ENCODE measurements at regions of chr18 and their contacts with region 1.

Region 1: DNA sequence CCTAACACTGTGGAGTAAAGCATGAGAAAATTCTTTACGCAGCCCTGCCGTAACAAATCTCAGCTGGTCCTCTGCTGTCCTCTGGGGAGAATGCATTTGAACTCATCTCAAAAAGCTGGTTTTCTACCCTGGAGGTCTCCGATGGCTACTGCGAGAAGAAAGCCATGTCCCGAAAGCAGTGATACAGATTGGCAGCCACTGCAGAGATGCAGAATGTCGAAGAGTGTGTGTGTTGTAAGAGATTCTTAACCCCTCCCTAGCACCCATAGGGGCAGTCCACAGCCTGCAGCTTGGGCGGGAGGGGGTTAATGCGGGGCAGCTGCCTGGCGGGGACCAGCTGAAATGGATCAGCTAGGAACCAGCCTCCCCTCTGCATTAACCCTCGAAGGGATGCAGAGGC is 235.9 kb downstream of the ZNF516 start:
- DNase-seq: no peak
- H3K4me3 ChIP-seq: no peak overlapping the region
- H3K27ac ChIP-seq: no peak overlapping the region
- H3K27me3 ChIP-seq: peaks cover 8% of the 10 kb centered on the region
- CTCF ChIP-seq: 0 out of 2 replicates have a peak, but pooled peaks have one; percentile 17

Region 2: DNA sequence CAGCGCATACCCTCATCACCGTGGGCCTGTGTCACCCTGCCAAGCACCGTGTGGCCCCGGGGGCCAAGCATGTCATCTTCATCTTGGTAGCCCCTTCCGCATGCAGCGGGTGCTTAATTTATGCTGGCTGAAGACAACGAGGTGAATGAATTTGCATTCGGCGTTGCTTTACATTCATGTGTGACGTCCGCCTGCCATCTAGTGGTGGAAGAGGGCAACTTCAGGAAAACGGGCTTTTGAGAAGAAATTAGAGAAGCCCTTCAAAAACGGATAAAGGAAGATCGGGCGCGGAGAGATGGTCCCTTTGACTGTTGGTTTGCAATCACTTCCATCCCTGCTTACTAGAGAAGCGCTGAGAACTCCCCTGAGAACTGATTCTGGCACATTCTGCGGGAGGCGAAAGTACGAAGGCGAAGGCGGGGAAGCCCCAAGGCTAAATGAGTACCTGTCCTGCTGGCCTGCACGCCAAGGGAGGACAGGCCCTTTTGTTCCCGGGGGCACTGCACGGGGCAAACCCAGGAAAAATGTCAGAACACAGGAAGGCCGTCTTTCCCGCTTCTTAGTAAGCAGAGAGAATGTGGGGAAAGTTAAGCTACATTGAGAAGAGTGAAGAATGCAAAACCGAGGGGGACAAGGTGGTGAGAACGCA is 90.1 kb after region 1 on chr18:
- CTCF ChIA-PET with region 1: interaction called, 10 read pairs
- POLR2A ChIA-PET with region 1: no interaction called
- DNase-seq: no peak
- H3K4me3 ChIP-seq: no peak overlapping the region
- H3K27ac ChIP-seq: no peak overlapping the region
- H3K27me3 ChIP-seq: no peaks in the 10 kb centered on the region
- CTCF ChIP-seq: peak; percentile 95